ENCODE measurements at regions of chr4 and their contacts with region 1.

Region 1: DNA sequence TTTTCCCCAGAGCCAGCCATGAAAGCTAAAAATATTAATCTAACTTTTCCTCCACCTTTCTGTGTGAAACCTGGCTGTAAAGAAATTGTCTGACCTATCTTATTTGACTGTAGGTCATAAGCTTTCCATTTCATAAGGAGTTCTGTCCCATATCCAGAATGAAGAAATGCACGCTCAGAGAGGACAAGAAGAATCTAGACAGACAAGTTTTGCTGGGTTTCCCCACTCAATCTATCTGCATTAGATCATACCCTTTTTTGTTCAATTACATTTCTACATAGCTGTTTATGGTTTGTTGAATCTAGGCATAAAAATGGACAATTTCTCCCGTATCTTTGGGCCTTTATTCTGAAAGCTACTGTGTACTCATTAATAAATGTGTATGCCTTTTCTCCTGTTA is 1495.1 kb downstream of the C4orf33 start:
- DNase-seq: no peak
- H3K4me3 ChIP-seq: no peak overlapping the region
- H3K27ac ChIP-seq: no peak overlapping the region
- H3K4me1 ChIP-seq: no peaks in the 10 kb centered on the region
- H3K27me3 ChIP-seq: no peaks in the 10 kb centered on the region
- CTCF ChIP-seq: no peak
- POLR2A ChIP-seq: no peak

Region 2: DNA sequence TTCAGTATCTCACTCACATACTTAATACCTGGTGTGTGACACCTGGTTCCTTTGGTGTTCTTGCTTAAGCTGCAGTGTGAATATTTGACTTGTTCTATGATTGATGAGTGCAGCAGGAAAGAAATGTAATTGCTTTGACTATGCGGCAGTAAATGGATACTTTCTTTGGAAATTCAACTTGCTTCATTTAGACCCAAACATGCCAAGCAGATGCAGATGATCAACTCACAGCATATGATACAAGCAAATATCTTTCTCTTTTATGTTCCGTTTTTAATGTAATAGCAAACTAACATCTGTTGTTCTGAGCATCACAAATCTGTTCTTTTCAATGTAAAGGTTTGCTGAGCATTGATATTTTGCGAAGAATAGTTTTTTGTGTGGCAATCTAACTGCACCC is 945.6 kb before region 1 on chr4:
- intact Hi-C with region 1: loop called (anchors 5 kb)
- DNase-seq: no peak
- H3K4me3 ChIP-seq: no peak overlapping the region
- H3K27ac ChIP-seq: no peak overlapping the region
- H3K4me1 ChIP-seq: no peaks in the 10 kb centered on the region
- H3K27me3 ChIP-seq: no peaks in the 10 kb centered on the region
- CTCF ChIP-seq: no peak
- POLR2A ChIP-seq: no peak

Region 3: DNA sequence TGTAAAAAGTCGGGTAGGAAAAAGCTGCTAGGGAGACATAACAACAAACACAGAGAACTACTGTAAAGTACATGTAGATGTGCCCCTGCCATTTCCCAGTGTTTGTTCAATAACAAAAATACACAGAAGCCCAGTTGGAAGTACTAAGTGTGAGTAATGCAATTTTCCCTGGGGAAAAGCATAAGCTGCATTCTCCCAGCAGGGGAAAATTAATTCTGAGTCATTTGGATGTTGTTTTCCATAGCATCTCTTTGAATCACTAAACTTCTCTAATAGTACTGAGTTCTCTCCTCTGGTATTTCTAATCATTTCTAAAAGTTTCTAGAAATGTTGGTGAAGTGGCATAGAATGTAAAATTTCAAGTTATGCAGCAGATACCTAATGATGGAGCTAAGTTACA is 380.2 kb before region 1 on chr4:
- intact Hi-C with region 1: no loop called
- DNase-seq: no peak
- H3K4me3 ChIP-seq: no peak overlapping the region
- H3K27ac ChIP-seq: no peak overlapping the region
- H3K4me1 ChIP-seq: no peaks in the 10 kb centered on the region
- H3K27me3 ChIP-seq: no peaks in the 10 kb centered on the region
- CTCF ChIP-seq: no peak
- POLR2A ChIP-seq: no peak

Region 4: DNA sequence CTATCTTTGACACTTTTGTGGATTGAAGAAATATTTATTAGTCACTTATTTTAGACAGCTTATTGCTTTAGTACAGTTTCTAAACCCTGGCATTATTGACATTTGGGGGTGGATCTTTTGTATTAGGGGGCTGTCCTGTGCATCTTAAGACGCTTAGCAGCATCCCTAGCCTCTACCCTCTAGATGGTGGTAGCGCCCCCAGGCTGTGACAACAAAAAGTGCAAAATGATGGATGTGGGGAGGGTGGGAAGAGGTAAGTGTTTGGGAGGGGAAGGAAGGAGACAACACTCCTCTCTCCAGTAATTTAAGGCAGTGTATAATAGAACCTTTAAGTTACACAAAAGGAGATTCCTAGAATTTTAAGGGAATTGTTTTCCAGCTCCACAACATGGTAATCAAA is 284.5 kb before region 1 on chr4:
- intact Hi-C with region 1: no loop called
- DNase-seq: no peak
- H3K4me3 ChIP-seq: no peak overlapping the region
- H3K27ac ChIP-seq: no peak overlapping the region
- H3K4me1 ChIP-seq: no peaks in the 10 kb centered on the region
- H3K27me3 ChIP-seq: no peaks in the 10 kb centered on the region
- CTCF ChIP-seq: no peak
- POLR2A ChIP-seq: no peak

Region 5: DNA sequence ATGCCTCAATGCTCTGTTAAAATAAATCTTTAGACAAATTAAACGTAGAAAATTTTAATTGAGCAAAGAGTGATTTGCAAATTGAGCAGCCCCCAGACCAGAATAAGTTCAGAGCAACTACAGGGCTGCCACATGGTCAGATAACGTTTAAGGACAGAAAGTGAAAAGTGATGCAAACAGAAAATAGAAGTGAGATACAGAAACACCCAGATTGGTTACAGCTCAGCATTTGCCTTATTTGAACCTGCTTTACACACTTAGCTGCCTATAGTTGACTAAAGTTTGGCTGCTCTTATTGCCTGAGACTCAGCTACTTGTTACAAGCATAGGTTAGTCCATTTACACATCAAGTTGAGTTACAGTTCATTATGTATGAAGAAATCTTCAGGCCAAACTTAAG is 757.2 kb after region 1 on chr4:
- intact Hi-C with region 1: loop called (anchors 5 kb)
- DNase-seq: no peak
- H3K4me3 ChIP-seq: no peak overlapping the region
- H3K27ac ChIP-seq: no peak overlapping the region
- H3K4me1 ChIP-seq: no peaks in the 10 kb centered on the region
- H3K27me3 ChIP-seq: no peaks in the 10 kb centered on the region
- CTCF ChIP-seq: no peak
- POLR2A ChIP-seq: no peak

Measured in breast epithelium (tissue), 4 donors.